ENCODE measurements at regions of chr10 and their contacts with region 1.

Region 1: DNA sequence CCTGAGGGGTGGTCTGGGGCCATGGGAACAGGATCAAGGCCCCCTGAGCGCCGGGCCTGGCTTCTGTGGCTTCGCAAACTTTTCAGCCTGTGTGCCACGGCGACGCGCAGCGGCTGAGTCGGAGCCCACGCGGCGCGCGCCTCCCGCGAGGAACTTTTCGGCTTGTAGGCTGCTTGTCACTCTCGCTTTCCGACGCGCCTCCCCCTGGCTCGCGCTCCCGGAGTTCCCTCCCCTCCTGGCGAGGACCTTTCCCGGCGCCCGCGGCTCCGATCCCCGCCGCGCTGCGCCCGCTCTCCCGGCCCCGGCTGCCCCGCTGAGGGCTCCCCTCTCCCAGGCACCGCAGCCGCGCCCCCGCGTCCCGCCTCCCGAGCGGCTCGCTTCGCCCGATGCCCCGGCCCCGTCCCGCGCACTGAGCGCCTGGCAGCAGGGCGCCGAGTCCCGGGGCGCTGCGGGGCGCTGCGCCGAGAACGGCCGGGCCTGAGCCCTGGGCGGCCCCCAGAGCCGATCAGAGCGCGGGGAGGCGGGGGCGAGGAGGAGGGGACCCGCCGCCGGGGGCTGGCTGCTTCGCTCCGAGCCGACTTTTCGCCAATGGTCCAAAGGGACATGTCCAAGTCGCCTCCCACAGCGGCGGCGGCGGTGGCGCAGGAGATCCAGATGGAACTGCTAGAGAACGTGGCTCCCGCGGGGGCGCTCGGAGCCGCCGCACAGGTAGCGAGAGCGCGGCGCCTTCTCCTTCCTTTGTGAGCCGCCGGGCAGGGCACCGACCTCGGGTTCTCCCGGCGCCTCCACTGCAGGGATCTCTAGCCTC is at the start of gene CACNB2:
- DNase-seq: peak; percentile 88
- total RNA-seq, gene CACNB2: 16.8 to 21.6 TPM

Region 2: GRCh38 chr10:18195060-18195799 is 54.9 kb after region 1 on chr10:
- intact Hi-C with region 1: loop called in 1 of 2 experiments (anchors 10 kb)
- DNase-seq: no peak

Region 3: DNA sequence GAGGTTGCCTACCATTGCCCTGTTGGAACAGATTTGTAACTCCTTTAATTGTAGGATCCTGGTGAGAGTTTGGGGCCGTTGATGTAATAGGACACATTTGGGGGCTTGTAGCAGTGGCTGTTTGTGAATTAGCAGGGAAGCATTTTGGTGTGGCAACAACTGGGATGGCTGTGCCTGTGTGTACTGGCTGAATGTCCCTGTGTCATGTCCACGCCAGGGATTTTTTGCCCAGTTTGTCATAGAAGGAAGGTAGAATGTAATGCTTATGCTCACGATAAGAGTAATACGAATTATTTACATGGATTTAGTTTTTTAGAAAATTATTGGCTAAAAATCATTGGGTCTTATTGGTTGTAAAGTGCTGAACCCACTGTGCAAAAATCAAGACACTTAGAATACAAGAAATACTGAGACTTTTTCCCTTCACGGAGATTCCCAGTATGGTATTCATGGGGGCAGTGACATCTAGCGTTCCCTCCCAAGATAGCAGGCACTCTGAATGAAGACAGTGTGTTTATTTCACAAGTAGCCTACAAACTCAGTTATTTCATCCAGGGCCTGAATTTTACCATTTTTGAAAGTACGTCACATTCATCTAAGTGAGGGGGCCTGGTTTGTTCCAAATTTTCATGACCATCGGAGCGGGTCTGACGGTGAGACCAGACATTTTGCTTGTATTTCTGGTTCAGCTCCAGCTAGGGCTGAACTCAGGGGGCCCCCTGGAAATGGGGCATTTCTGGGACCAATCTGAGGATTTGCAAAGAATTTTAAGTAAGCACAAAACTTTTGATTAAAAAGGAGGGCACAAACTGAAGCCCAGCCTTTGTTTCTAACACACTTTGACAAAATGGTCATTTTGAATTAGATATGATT is 74.6 kb after region 1 on chr10:
- intact Hi-C with region 1: loop called in 1 of 2 experiments (anchors 10 kb)
- DNase-seq: no peak

Measured in posterior vena cava (tissue), 2 donors.